Esophagus muscularis mucosa (tissue), 4 donors: ENCODE measurements at regions of chr10 and their contacts with region 1.

Region 1: GRCh38 chr10:97792141-97792721 is 20.4 kb upstream of the SFRP5 start:
- DNase-seq: no peak
- H3K4me3 ChIP-seq: no peak overlapping the region
- H3K27ac ChIP-seq: no peak overlapping the region
- H3K4me1 ChIP-seq: peaks cover 0 to 12% (median 9%) of the 10 kb centered on the region in 4 donors
- H3K27me3 ChIP-seq: peaks cover 0 to 63% (median 0%) of the 10 kb centered on the region in 4 donors
- CTCF ChIP-seq: peak; percentile 70 to 94 (median 84)
- EP300 ChIP-seq: no peak
- POLR2A ChIP-seq: no peak

Region 2: GRCh38 chr10:96260014-96260413 is 1532.2 kb before region 1 on chr10:
- intact Hi-C with region 1: no loop called
- DNase-seq: no peak
- H3K4me3 ChIP-seq: no peak overlapping the region
- H3K27ac ChIP-seq: no peak overlapping the region
- H3K4me1 ChIP-seq: peaks cover 0 to 8% (median 7%) of the 10 kb centered on the region in 4 donors
- H3K27me3 ChIP-seq: no peaks in the 10 kb centered on the region
- CTCF ChIP-seq: no peak
- EP300 ChIP-seq: no peak
- POLR2A ChIP-seq: no peak

Region 3: GRCh38 chr10:97869091-97870042 is 77.1 kb after region 1 on chr10:
- intact Hi-C with region 1: loop called (anchors 1 kb)
- DNase-seq: no peak
- H3K4me3 ChIP-seq: no peak overlapping the region
- H3K27ac ChIP-seq: peak overlapping the region in 1 of 4 donors; percentile 36
- H3K4me1 ChIP-seq: peaks cover 11 to 15% (median 12%) of the 10 kb centered on the region in 4 donors
- H3K27me3 ChIP-seq: peaks cover 0 to 27% (median 0%) of the 10 kb centered on the region in 4 donors
- CTCF ChIP-seq: peak; percentile 64 to 82 (median 81)
- EP300 ChIP-seq: no peak
- POLR2A ChIP-seq: no peak